ENCODE measurements at regions of chr6 and their contacts with region 1.

Region 1: GRCh38 chr6:100479179-100480035 is 14.7 kb upstream of the SIM1 start:
- DNase-seq: peak; percentile 70
- H3K4me3 Mint-ChIP-seq: no peak overlapping the region
- H3K27ac Mint-ChIP-seq: no peak overlapping the region
- H3K4me1 Mint-ChIP-seq: peaks cover 3% of the 10 kb centered on the region
- H3K27me3 Mint-ChIP-seq: peaks cover 20% of the 10 kb centered on the region

Region 2: DNA sequence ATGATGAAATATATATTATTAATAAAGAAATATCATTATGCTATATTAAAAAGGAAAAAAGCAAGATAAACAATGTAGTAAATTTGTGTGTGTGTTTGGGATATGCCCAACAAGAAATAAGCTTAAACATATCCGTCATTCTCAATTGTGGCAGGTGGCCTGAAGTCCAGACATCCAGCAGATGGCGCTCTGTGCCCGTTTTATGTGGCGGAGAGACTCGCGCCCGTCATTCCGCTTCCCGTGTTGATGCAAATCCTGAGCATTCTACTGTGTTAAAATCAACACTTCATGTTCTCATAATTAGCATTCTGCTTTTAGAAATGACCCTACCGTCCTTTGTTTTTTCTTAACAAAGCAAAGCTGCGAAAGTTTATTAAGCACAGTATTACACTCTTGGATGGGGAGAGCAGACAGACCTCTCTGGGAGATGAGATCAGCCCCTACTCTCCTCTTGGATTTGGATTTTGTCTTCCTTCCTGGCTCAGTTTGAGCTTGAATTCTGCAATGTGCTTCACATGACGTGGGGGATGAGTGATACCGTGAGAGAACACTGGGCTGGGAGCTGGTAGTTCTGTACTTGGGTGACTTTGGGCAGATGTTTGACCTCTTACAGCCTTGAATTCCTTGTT is 611.2 kb before region 1 on chr6:
- intact Hi-C with region 1: loop called (anchors 5 kb)
- DNase-seq: peak; percentile 90
- H3K4me3 Mint-ChIP-seq: no peak overlapping the region
- H3K27ac Mint-ChIP-seq: no peak overlapping the region
- H3K4me1 Mint-ChIP-seq: no peaks in the 10 kb centered on the region
- H3K27me3 Mint-ChIP-seq: peaks cover 20% of the 10 kb centered on the region

Region 3: GRCh38 chr6:100001915-100002388 is 477.5 kb before region 1 on chr6:
- intact Hi-C with region 1: loop called (anchors 1 kb)
- DNase-seq: peak; percentile 78
- H3K4me3 Mint-ChIP-seq: no peak overlapping the region
- H3K27ac Mint-ChIP-seq: no peak overlapping the region
- H3K4me1 Mint-ChIP-seq: no peaks in the 10 kb centered on the region
- H3K27me3 Mint-ChIP-seq: peaks cover 13% of the 10 kb centered on the region

Region 4: DNA sequence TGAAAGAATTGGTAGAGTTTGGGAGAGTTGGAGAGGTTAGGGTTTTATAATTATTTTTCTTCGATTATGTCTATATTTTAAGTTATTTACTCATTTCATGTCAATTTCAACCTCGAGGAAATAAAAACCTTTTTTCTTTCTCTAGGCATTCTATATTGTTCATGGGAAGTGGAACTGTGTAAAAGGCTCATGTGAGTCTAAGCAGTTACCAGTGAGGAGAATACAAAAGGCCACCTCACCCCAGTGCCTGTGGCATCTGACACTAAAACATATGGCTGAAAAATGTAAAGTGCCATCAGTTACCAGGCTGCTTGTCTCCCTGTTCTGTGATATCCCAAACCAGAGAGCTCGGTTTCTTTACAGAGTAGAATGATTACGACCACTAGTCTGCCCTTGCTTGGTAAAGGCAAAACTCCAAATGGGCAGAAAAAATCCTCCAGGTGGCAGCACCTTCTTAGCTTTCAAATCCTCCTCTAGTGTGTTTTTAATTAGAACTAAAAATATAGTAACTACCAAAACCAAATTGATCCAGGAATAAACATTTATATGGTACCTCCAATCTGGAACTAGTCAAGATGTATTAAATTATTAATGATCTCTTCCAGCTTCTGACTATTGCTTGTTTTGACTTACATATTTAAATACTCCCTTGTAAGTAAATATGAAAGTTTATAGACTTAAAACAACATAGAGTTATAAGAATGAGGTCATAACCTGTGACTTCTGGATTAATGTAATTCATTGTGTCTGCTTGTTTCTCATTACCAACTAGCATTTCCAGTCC is 362.8 kb before region 1 on chr6:
- intact Hi-C with region 1: loop called (anchors 1 kb)
- DNase-seq: peak; percentile 69
- H3K4me3 Mint-ChIP-seq: no peak overlapping the region
- H3K27ac Mint-ChIP-seq: no peak overlapping the region
- H3K4me1 Mint-ChIP-seq: no peaks in the 10 kb centered on the region
- H3K27me3 Mint-ChIP-seq: peaks cover 7% of the 10 kb centered on the region

Region 5: DNA sequence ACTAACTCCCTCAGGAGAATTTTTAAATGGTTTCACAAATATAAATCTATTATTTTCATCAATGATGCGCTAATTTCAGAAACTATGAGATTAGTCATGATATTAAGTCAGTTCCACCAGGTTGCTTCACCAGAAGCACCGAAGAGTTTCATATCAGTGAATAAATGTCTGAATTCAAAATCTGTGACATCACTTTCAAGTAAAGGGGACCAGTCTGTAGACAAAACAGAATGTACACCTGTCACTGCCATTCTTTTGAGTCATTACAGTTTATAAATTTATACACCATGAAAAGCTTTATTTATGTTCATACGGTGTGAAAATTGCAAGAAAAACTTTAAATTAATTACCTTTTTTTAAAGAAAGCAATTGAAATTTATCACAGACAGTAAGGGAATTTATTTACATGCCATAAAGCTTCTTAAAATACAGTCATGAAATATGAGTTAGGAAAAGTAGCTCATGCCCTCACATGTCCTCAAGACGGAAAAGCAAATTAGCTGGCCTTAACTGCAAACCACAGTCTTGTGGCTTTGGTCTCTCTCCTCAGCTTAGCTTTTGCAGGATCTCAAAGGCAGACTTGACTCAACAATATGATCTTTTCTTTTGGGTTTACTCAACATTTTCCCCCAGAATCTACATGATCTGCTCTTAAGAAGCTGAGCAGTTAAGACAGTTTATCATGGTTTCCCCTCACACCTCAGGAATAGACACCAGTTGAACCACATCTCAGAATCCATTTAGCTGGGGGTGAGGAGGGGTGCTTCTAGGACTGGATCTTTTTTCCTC is 307.7 kb before region 1 on chr6:
- intact Hi-C with region 1: loop called (anchors 5 kb)
- DNase-seq: peak; percentile 59
- H3K4me3 Mint-ChIP-seq: no peak overlapping the region
- H3K27ac Mint-ChIP-seq: no peak overlapping the region
- H3K4me1 Mint-ChIP-seq: no peaks in the 10 kb centered on the region
- H3K27me3 Mint-ChIP-seq: peaks cover 2% of the 10 kb centered on the region

Region 6: GRCh38 chr6:100228831-100229641 is 250.4 kb before region 1 on chr6:
- intact Hi-C with region 1: loop called (anchors 10 kb)
- DNase-seq: peak; percentile 76
- H3K4me3 Mint-ChIP-seq: peak overlapping the region; percentile 77
- H3K27ac Mint-ChIP-seq: no peak overlapping the region
- H3K4me1 Mint-ChIP-seq: peaks cover 5% of the 10 kb centered on the region
- H3K27me3 Mint-ChIP-seq: peaks cover 17% of the 10 kb centered on the region

Region 7: DNA sequence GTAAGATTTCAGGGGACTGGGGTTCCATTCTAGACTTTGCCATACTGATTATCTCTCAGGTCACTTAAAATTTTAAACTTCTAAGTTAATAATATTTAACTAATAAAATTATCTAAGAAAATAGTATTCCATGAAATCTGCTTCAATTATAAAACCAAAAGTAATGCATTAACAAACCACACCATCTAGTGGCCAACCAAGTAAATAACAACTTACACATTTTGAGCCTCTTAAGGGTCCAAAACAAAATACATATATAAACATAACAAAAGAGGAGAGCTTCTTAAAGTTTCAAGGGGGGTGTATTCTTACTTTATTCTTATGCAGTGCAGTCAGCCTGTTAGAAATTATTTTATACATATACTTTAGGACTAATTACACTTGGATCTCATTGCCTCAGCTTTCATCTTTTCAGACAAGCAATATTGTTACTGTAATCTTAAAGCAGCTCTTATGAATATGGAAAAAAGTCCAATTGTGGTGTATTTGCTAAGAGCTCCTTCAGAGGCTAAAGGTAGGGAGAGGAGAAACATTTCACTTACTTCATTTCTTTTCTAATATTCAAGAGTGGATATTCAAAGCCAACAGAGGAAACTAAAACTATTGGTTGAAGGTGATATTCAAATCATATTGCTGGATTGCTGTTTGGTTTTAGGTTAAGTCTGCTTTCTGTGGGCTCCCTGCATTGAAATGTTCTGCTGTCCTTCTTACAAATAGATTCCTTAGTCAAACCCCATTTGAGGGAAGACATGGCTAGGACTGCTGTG is 185.1 kb after region 1 on chr6:
- intact Hi-C with region 1: loop called (anchors 5 kb)
- DNase-seq: no peak
- H3K4me3 Mint-ChIP-seq: no peak overlapping the region
- H3K27ac Mint-ChIP-seq: no peak overlapping the region
- H3K4me1 Mint-ChIP-seq: peaks cover 6% of the 10 kb centered on the region
- H3K27me3 Mint-ChIP-seq: no peaks in the 10 kb centered on the region

Measured in activated CD4-positive, alpha-beta T cell treated with anti-CD3 and anti-CD28 coated beads, Interleukin-2, amount 10 ng/mL, durations not matched to agents 24 days and 14 days (primary cell).